KBM-7 (cell line): ENCODE measurements at regions of chr17 and their contacts with region 1.

Region 1: GRCh38 chr17:43760254-43760852 is 1.8 kb upstream of the SOST start:
- DNase-seq: peak; percentile 90

Region 2: GRCh38 chr17:43576563-43577229 is 183.7 kb before region 1 on chr17:
- in situ Hi-C with region 1: loop called (anchors 10 kb)
- DNase-seq: peak; percentile 73

Region 3: DNA sequence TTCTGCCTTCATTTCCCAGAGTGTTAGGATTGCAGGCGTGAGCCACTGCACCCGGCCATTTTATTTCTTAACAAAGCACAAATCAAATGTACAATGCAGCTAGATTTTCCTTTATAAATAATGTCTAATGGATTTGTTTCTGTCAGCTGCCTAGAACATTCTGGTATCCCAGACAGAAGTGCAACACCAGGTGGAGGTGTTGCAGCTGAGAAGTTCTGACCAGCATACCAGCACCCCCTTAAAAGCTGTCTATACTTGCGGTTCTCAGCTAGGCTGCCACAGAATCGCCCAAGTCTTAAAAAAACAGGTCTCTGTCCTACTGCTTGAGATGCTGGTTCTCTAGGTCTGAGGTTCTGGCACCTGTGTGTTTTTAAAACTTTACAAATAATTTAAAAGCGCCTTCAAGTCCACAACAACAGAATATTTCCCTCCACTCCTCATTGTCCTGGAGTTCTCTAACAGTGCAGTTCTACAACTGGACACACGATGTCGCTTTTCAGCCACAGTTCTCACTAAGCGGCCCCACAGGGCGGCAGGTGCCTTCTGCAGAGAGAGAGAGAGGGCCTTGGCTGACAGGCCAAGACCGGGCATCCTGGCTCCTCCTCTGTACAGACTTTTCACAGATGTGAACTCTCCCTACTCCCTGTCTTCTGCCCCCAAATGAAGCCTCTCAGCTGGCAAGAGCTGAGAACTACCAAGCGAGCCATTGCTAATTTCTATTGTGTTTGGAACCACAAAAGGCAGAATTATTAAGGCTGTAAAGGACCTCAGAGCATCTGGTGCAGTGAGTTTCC is 66.1 kb before region 1 on chr17:
- in situ Hi-C with region 1: loop called (anchors 10 kb)
- DNase-seq: peak; percentile 86

Region 4: GRCh38 chr17:43878260-43879175 is 118.2 kb after region 1 on chr17:
- in situ Hi-C with region 1: no loop called
- DNase-seq: peak; percentile 83

Region 5: DNA sequence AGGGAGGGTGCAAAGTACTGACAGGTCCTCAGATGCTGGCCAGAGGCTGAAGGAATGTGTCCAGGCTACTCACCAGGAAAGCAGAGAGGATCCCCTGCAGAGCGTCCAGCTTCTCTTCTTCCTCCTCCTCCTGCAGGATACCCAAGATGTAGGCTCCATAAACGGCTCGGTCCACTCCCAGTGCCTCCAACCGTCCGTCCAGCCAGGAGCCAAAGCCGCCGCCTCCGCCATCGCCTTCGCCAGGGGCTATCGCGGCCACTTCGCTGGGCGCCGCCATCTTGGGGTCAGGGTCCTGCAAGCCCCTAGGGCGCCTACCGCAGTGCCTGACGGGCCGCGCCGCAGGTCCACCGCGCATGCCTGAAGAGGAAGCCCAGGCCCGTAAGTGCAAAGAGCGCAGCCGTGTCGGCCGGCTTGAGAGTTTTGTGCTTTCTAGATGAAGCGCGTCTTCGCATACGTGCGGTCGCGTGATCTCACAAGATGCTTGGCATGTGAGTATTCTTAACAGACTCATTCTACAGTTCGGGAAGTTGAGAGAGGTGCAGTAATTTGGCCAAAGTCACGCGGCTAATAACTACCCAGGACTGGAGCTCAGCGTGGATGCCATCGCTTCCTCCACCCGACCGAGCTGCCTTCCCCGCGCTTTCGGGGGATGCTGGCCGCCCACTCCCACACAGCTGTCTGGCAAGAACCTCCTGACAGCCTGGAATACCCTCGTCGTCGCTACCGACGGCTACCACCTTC is 929.3 kb after region 1 on chr17 and contains the start of gene CCDC43:
- in situ Hi-C with region 1: no loop called
- DNase-seq: peak; percentile 94